PC-9 (cell line): ENCODE measurements at regions of chr10 and their contacts with region 1.

Region 1: DNA sequence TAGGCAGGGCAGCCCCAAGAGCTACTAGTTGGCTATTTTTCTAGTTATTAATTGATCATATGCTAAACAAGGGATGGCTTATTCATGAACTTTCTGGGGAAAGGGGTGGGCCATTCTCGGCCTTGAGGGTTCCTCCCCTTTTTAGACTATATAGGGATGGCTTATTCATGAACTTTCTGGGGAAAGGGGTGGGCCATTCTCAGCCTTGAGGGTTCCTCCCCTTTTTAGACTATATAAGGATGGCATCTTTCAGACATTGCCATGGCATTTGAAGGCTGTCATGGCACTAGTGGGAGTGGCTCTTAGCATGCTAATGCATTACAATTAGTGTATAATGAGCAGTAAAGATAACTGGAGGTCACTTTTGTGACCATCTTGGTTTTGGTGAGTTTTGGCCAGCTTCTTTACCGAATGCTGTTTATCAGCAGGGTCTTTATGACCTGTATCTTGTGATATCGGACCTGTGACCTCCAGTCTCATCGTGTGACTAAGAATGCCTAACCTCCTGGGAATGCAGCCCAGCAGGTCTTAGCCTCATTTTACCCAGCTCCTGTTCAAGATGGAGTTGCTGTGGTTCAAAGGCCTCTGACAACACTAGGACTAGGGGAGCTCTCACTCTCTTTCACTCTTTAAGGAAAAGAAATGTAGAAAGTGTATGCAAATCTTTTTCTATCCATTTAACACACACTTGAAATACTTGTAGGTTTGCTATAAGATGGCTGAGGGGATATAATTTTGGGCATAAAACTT is 7.8 kb downstream of the FHIP2A start:
- DNase-seq: no peak
- H3K4me3 ChIP-seq: no peak overlapping the region
- H3K27ac ChIP-seq: no peak overlapping the region
- H3K4me1 ChIP-seq: peaks cover 18% of the 10 kb centered on the region
- H3K27me3 ChIP-seq: no peaks in the 10 kb centered on the region
- CTCF ChIP-seq: no peak

Region 2: GRCh38 chr10:114810926-114811325 is 18.4 kb before region 1 on chr10:
- CTCF ChIA-PET with region 1: interaction called, 10 read pairs
- POLR2A ChIA-PET with region 1: no interaction called
- intact Hi-C with region 1: no loop called
- DNase-seq: no peak
- H3K4me3 ChIP-seq: no peak overlapping the region
- H3K27ac ChIP-seq: no peak overlapping the region
- H3K4me1 ChIP-seq: no peaks in the 10 kb centered on the region
- H3K27me3 ChIP-seq: no peaks in the 10 kb centered on the region
- CTCF ChIP-seq: no peak

Region 3: GRCh38 chr10:115250784-115251183 is 421.4 kb after region 1 on chr10:
- CTCF ChIA-PET with region 1: no interaction called
- POLR2A ChIA-PET with region 1: no interaction called
- intact Hi-C with region 1: no loop called
- DNase-seq: no peak
- H3K4me3 ChIP-seq: no peak overlapping the region
- H3K27ac ChIP-seq: no peak overlapping the region
- H3K4me1 ChIP-seq: no peaks in the 10 kb centered on the region
- H3K27me3 ChIP-seq: no peaks in the 10 kb centered on the region
- CTCF ChIP-seq: no peak